T-cell (primary cell): ENCODE measurements at regions of chr6 and their contacts with region 1.

Region 1: DNA sequence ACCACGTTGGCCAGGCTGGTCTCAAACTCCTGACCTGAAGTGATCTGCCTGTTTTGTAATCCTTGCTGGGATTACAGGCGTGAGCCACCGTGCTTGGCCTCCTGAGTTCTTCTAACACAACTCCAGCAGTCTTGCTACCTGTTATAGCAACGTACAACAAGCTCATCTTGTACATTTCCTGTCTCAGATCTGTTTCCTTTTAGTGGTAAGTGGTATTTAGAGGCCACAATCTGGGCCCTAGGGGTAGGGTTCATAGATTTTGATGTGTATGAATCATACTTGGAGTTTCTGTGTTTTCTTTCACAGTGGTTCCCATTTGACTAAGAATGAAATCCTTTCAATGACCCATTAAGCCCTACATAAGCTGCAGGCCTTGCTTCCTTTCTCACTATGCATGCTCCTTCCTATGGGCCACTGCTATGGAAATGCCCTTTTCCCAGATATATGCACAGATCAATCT is 27.1 kb upstream of the SYNCRIP start:
- DNase-seq: peak in 33 of 35 experiments; percentile 12 to 74 (median 33)
- ATAC-seq: peak; percentile 82 to 99 (median 96)
- H3K4me3 ChIP-seq: no peak overlapping the region
- H3K4me3 Mint-ChIP-seq: peak overlapping the region; percentile 57 to 68 (median 60)
- H3K27ac ChIP-seq: peak overlapping the region; percentile 79
- H3K27ac Mint-ChIP-seq: peak overlapping the region; percentile 92 to 96
- H3K4me1 ChIP-seq: peaks cover 16 to 22% of the 10 kb centered on the region in 2 experiments
- H3K4me1 Mint-ChIP-seq: peaks cover 55 to 62% (median 59%) of the 10 kb centered on the region in 3 donors
- H3K27me3 ChIP-seq: no peaks in the 10 kb centered on the region
- H3K27me3 Mint-ChIP-seq: no peaks in the 10 kb centered on the region

Region 2: DNA sequence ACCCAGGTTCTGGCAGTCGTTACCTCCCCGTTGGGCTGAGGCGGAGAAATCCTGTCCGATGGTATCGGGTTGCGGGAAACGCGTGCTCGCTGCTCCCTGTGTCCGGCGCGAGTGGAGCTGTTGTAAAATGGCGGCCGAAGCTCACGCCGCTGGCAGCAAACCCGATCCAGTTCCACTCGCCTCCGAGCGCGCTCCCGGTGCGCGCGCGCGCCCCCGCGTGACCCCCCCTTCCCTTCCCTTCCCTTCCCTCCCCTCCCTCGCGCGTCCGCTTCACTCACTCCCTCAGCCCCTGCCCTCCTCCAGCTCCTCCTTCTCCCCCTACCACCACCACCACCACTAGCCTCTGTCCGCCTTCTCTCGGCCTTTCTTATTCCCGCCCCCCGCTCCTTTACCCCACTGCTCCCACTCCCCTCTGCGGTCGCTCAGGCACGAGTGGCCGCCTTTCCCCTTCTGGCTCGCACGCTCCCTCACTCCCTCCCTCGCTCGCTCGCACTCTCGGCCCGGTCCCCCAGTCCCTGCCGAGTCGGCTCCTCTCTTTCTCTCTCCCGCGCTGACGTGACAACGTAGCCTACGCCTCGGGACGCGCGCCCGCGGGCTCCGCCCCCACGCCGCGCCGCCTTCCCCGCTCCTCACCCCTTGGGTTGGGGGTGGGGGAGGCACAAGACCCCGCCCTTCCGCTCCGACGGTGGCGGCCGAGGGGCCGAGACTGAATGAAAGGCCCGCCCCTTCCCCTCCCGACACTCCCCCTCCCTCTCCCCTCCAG is 26.8 kb before region 1 on chr6 and contains the start of gene SYNCRIP:
- CTCF ChIA-PET with region 1: interaction called, 3 to 9 read pairs
- POLR2A ChIA-PET with region 1: interaction called, 10 to 441 read pairs
- DNase-seq: peak; percentile 96 to 99 (median 98)
- ATAC-seq: peak; percentile 81 to 86 (median 82)
- H3K4me3 ChIP-seq: peak within 1 kb of the TSS; percentile 93 to 100
- H3K4me3 Mint-ChIP-seq: peak within 1 kb of the TSS; percentile 87 to 93 (median 91)
- H3K27ac ChIP-seq: peak within 1 kb of the TSS; percentile 99
- H3K27ac Mint-ChIP-seq: peak within 1 kb of the TSS; percentile 97 to 99
- H3K4me1 ChIP-seq: peaks cover 12 to 27% of the 10 kb centered on the region in 2 experiments
- H3K4me1 Mint-ChIP-seq: peaks cover 45 to 52% (median 48%) of the 10 kb centered on the region in 3 donors
- H3K27me3 ChIP-seq: no peaks in the 10 kb centered on the region
- H3K27me3 Mint-ChIP-seq: no peaks in the 10 kb centered on the region
- total RNA-seq, gene SYNCRIP: 73.5 to 85.1 (median 80.5) TPM

Region 3: GRCh38 chr6:85756982-85757381 is 87.2 kb after region 1 on chr6:
- CTCF ChIA-PET with region 1: no interaction called
- POLR2A ChIA-PET with region 1: no interaction called
- DNase-seq: peak in 1 of 35 experiments; percentile 8
- ATAC-seq: no peak
- H3K4me3 ChIP-seq: no peak overlapping the region
- H3K4me3 Mint-ChIP-seq: no peak overlapping the region
- H3K27ac ChIP-seq: no peak overlapping the region
- H3K27ac Mint-ChIP-seq: no peak overlapping the region
- H3K4me1 ChIP-seq: no peaks in the 10 kb centered on the region
- H3K4me1 Mint-ChIP-seq: no peaks in the 10 kb centered on the region
- H3K27me3 ChIP-seq: peaks cover 0 to 1% of the 10 kb centered on the region in 2 experiments
- H3K27me3 Mint-ChIP-seq: peaks cover 0 to 16% of the 10 kb centered on the region in 2 donors